Activated CD8-positive, alpha-beta T cell treated with anti-CD3 and anti-CD28 coated beads, Interleukin-2, amount 10 ng/mL, durations not matched to agents 7 days and 5 days (primary cell): ENCODE measurements at regions of chr1 and their contacts with region 1.

Region 1: GRCh38 chr1:145963995-145964901 is at the starts of genes ANKRD34A and POLR3GL:
- DNase-seq: peak; percentile 96
- ATAC-seq: peak; percentile 92
- H3K4me3 Mint-ChIP-seq: peak within 1 kb of the TSS; percentile 93
- H3K27ac Mint-ChIP-seq: peak within 1 kb of the TSS; percentile 91
- H3K4me1 Mint-ChIP-seq: peaks cover 50% of the 10 kb centered on the region
- H3K27me3 Mint-ChIP-seq: no peaks in the 10 kb centered on the region
- total RNA-seq, gene ANKRD34A: 1.8 to 2.4 TPM
- total RNA-seq, gene POLR3GL: 25.0 to 26.5 TPM

Region 2: GRCh38 chr1:145782166-145783099 is 181.8 kb before region 1 on chr1:
- CTCF ChIA-PET with region 1: no interaction called
- POLR2A ChIA-PET with region 1: no interaction called
- DNase-seq: no peak
- ATAC-seq: no peak
- H3K4me3 Mint-ChIP-seq: no peak overlapping the region
- H3K27ac Mint-ChIP-seq: no peak overlapping the region
- H3K4me1 Mint-ChIP-seq: peaks cover 25% of the 10 kb centered on the region
- H3K27me3 Mint-ChIP-seq: no peaks in the 10 kb centered on the region

Region 3: DNA sequence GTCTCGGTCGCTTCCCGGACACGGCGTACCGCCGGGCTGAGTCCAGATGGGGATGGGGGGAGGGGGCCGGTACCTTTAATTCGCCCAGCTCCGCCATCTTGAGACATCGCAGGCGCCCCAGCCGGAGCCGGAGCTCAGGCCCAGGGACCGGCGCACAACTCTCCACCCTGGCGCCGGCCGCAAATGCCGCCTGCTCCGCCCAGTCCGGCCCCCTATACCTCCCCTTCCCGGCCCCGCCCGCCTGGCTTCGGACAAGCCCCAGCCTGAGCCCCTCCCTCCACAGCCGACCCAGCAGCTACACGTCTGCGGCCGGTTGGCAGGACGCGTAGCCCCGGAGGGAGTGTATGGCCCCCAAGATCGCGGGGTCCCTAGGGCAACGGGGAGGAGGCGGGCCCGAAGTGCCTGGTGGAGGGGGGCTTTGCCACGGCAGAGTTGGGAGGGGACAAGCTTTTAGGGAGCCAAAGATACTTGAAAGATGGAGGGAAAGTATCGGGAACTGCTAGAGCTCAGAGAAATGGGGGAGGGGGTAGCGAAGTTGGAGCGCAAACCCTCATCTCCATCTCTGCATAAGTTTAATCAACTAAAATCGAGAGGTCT is 105.3 kb before region 1 on chr1 and contains the start of gene PIAS3:
- CTCF ChIA-PET with region 1: interaction called, 4 read pairs
- POLR2A ChIA-PET with region 1: interaction called, 11 read pairs
- DNase-seq: peak; percentile 91
- ATAC-seq: peak; percentile 86
- H3K4me3 Mint-ChIP-seq: peak within 1 kb of the TSS; percentile 95
- H3K27ac Mint-ChIP-seq: peak within 1 kb of the TSS; percentile 87
- H3K4me1 Mint-ChIP-seq: peaks cover 21% of the 10 kb centered on the region
- H3K27me3 Mint-ChIP-seq: peaks cover 11% of the 10 kb centered on the region
- total RNA-seq, gene PIAS3: 19.8 to 23.7 TPM

Region 4: GRCh38 chr1:145906954-145907753 is 57.1 kb before region 1 on chr1:
- CTCF ChIA-PET with region 1: interaction called, 13 read pairs
- POLR2A ChIA-PET with region 1: interaction called, 4 read pairs
- DNase-seq: no peak
- ATAC-seq: no peak
- H3K4me3 Mint-ChIP-seq: no peak overlapping the region
- H3K27ac Mint-ChIP-seq: no peak overlapping the region
- H3K4me1 Mint-ChIP-seq: peaks cover 7% of the 10 kb centered on the region
- H3K27me3 Mint-ChIP-seq: no peaks in the 10 kb centered on the region

Region 5: DNA sequence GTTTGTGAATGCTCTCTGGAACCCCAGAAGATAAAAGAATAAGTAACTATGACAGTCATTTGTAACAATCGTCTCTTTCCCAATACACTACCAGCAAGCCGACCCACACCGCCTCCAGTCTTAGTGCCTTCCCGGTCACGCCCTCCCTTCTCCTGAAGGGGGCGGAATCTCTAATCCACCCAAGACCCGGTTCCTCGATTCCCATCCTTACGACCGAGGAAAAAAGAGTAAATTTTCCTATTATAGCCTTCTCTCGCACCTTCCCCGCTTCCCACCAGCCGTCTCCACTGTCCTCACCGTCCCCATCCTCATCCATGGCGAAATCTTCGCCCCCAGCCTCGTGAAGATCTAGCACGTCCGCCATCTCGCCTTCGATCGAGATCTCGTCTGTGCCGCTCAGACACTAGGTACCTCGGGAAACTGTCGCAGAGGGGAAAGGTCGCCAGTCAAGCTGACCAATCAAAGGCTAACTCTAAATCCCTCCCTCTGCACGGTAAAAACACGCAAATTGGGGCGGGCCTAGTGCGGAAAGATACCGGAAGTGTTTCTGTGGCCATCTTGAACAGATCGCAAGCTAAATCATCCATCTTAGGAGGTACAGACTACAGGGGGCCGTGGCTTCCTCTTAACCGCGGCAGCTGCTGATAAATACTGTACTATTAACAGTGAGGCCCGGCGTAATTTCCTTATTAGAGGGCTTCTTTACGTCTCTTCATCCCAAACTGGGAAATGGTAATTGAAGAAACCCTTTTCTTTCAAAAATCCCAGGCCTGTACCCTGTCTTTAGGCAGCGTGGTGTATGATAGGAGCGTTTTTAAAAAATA is 37.0 kb before region 1 on chr1 and contains the start of gene RBM8A:
- CTCF ChIA-PET with region 1: interaction called, 46 read pairs
- POLR2A ChIA-PET with region 1: interaction called, 32 read pairs
- DNase-seq: peak; percentile 98
- ATAC-seq: peak; percentile 98
- H3K4me3 Mint-ChIP-seq: no peak within 1 kb of the TSS
- H3K27ac Mint-ChIP-seq: peak within 1 kb of the TSS; percentile 79
- H3K4me1 Mint-ChIP-seq: peaks cover 25% of the 10 kb centered on the region
- H3K27me3 Mint-ChIP-seq: no peaks in the 10 kb centered on the region
- total RNA-seq, gene RBM8A: 202 to 204 TPM

Region 6: DNA sequence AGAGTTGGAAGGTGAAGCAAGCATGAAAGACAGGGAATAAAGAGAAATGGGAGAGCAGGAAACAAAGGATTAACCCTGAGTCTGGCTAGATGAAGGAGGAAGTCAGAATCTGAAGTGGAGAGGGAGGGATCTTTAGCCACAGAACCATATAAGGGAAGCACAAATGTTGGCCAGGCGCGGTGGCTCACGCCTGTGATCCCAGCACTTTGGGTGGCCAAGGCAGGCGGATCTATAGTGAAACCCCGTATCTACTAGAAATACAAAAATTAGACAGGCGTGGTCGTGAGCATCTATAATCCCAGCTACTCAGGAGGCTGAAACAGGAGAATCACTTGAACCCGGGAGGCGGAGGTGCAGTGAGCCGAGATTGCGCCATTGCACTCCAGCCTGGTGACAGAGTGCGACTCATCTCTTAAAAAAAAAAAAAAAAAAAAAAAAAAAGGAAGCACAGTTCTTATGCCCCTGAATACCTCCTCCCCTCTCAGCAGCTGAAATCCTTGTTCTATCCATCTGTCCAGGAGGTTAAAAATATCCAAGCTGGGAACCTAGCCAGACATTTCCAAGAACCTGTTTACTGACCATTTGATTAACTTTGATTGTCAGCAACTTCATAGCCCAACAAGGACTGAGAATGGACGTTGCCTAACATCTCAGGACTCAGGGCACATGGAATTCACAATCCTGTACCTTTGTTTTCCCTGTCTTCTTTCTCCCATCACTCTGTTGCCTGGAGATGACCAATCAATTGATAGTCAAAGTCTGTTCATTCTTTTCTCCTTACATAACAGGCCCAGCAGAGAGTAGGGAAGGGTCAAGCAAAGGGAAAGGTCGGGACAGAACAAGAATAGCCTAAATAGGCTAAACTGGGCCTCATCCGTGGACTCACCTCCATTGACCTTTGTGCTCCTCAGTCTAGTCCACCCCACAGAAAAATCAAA is 21.5 kb after region 1 on chr1:
- CTCF ChIA-PET with region 1: interaction called, 98 read pairs
- POLR2A ChIA-PET with region 1: interaction called, 58 read pairs
- DNase-seq: no peak
- ATAC-seq: no peak
- H3K4me3 Mint-ChIP-seq: no peak overlapping the region
- H3K27ac Mint-ChIP-seq: peak overlapping the region; percentile 67
- H3K4me1 Mint-ChIP-seq: peaks cover 54% of the 10 kb centered on the region
- H3K27me3 Mint-ChIP-seq: no peaks in the 10 kb centered on the region

Region 7: DNA sequence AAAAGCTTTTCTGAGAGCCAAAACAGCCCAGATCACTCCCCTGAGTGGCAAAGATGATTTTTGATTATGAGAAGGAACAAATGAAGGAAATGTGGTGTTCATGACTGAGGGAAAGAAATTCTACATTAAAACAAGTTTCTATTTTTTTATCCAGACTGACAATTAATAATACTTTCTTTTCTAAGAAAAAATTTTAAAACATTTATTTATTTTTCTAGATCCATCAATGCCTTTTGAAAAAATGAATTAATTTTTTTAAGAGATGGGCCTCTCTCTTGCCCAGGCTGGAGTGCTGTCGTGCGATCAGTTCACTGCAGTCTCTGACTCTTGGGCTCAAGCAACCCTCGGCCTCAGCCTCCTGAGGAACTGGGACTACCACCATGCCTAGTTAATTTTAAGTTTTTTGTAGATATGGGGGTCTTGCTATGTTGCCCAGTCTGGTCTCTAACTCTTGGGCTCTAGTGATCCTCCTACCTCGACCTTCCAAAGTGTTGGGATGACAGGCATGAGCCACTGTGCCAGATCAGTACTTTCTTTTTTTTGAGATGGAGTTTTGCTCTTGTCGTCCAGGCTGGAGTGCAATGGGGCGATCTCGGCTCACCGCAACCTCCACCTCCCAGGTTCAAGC is 43.4 kb after region 1 on chr1:
- CTCF ChIA-PET with region 1: interaction called, 16 read pairs
- POLR2A ChIA-PET with region 1: interaction called, 9 read pairs
- DNase-seq: no peak
- ATAC-seq: no peak
- H3K4me3 Mint-ChIP-seq: peak overlapping the region; percentile 69
- H3K27ac Mint-ChIP-seq: peak overlapping the region; percentile 91
- H3K4me1 Mint-ChIP-seq: peaks cover 39% of the 10 kb centered on the region
- H3K27me3 Mint-ChIP-seq: no peaks in the 10 kb centered on the region

Region 8: GRCh38 chr1:146049436-146049835 is 85.2 kb after region 1 on chr1:
- CTCF ChIA-PET with region 1: no interaction called
- POLR2A ChIA-PET with region 1: interaction called, 15 read pairs
- DNase-seq: no peak
- ATAC-seq: no peak
- H3K4me3 Mint-ChIP-seq: no peak overlapping the region
- H3K27ac Mint-ChIP-seq: peak overlapping the region; percentile 39
- H3K4me1 Mint-ChIP-seq: peaks cover 33% of the 10 kb centered on the region
- H3K27me3 Mint-ChIP-seq: peaks cover 5% of the 10 kb centered on the region